A673 (cell line): ENCODE measurements at regions of chr13 and their contacts with region 1.

Region 1: GRCh38 chr13:35978603-35979316 is 152.4 kb downstream of the DCLK1 start:
- DNase-seq: peak; percentile 79
- H3K4me3 ChIP-seq: no peak overlapping the region
- H3K27ac ChIP-seq: no peak overlapping the region
- H3K4me1 ChIP-seq: peaks cover 5% of the 10 kb centered on the region
- H3K27me3 ChIP-seq: no peaks in the 10 kb centered on the region
- CTCF ChIP-seq: peak; percentile 78

Region 2: GRCh38 chr13:36207672-36208071 is 228.9 kb after region 1 on chr13:
- CTCF ChIA-PET with region 1: no interaction called
- POLR2A ChIA-PET with region 1: no interaction called
- intact Hi-C with region 1: loop called (anchors 1 kb)
- DNase-seq: no peak
- H3K4me3 ChIP-seq: no peak overlapping the region
- H3K27ac ChIP-seq: no peak overlapping the region
- H3K4me1 ChIP-seq: peaks cover 5% of the 10 kb centered on the region
- H3K27me3 ChIP-seq: no peaks in the 10 kb centered on the region
- CTCF ChIP-seq: peak; percentile 42

Region 3: GRCh38 chr13:36275190-36276002 is 296.6 kb after region 1 on chr13:
- CTCF ChIA-PET with region 1: interaction called, 25 read pairs
- POLR2A ChIA-PET with region 1: no interaction called
- intact Hi-C with region 1: loop called (anchors 1 kb)
- DNase-seq: peak; percentile 79
- H3K4me3 ChIP-seq: no peak overlapping the region
- H3K27ac ChIP-seq: no peak overlapping the region
- H3K4me1 ChIP-seq: no peaks in the 10 kb centered on the region
- H3K27me3 ChIP-seq: no peaks in the 10 kb centered on the region
- CTCF ChIP-seq: peak; percentile 76

Region 4: DNA sequence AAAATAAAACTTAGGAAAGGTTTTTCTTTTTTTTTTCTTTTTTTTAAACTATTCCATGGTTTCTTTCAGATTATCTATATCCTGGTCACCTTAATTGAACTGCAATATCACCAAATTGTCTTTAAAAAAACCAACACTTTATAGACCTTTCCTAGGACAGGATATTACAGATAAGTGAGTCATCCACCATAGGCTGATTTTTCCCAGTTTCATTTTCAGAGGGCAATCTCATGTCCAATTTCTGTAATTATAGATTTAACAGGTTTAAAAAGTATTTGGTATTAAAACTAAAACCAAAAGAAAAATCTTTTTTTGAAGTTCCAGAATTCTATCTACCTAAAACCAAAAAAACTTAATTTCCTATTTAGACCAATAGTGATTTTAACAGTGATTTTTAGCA is 354.2 kb after region 1 on chr13:
- CTCF ChIA-PET with region 1: no interaction called
- POLR2A ChIA-PET with region 1: no interaction called
- intact Hi-C with region 1: no loop called
- DNase-seq: no peak
- H3K4me3 ChIP-seq: no peak overlapping the region
- H3K27ac ChIP-seq: no peak overlapping the region
- H3K4me1 ChIP-seq: peaks cover 36% of the 10 kb centered on the region
- H3K27me3 ChIP-seq: no peaks in the 10 kb centered on the region
- CTCF ChIP-seq: no peak